ENCODE measurements at regions of chr9 and their contacts with region 1.

Region 1: DNA sequence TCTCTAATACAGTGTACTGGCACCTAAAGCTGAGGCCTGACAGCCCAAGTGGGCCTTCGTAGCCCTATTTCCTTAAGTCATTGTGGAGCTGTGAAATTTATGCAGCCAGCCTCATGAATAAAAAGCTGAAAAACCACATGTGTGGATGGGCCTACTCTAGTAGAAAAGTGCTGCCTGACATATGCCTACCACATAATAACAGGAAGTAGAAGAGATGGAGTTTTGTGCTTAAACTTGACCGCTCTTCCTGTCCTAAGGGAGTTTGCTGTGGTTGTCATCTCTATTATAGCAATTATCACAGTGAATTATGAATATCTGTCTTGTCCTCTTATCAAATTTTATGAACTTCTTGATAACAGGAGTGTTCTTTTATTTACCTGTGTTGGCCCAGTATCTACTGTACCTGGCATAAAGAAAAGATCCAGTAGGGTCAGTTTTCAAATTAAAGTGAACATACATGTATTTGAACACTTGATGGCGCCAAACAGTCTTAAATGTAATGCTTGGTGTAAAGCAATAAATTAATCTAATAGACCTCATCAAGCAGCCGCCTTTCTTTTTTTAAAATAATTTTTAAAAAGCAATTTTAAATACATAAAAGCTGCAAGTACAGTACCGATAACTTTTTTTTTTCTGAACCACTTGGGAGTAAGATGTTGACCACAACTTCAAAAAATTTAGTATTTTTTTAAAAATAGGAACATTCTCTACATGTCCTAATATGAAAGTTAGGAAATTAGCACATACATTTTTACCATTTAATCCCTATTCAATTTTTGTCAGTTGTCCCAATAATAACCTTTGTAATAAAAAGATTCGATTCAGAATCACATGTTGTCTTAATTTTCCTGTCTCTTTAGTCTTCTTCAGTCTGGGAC is 51.0 kb downstream of the FKTN start:
- DNase-seq: peak; percentile 34
- CTCF ChIP-seq: peak; percentile 42

Region 2: GRCh38 chr9:104863180-104863883 is 745.6 kb before region 1 on chr9:
- CTCF ChIA-PET with region 1: no interaction called
- POLR2A ChIA-PET with region 1: no interaction called
- DNase-seq: peak; percentile 65
- CTCF ChIP-seq: peak; percentile 85

Region 3: DNA sequence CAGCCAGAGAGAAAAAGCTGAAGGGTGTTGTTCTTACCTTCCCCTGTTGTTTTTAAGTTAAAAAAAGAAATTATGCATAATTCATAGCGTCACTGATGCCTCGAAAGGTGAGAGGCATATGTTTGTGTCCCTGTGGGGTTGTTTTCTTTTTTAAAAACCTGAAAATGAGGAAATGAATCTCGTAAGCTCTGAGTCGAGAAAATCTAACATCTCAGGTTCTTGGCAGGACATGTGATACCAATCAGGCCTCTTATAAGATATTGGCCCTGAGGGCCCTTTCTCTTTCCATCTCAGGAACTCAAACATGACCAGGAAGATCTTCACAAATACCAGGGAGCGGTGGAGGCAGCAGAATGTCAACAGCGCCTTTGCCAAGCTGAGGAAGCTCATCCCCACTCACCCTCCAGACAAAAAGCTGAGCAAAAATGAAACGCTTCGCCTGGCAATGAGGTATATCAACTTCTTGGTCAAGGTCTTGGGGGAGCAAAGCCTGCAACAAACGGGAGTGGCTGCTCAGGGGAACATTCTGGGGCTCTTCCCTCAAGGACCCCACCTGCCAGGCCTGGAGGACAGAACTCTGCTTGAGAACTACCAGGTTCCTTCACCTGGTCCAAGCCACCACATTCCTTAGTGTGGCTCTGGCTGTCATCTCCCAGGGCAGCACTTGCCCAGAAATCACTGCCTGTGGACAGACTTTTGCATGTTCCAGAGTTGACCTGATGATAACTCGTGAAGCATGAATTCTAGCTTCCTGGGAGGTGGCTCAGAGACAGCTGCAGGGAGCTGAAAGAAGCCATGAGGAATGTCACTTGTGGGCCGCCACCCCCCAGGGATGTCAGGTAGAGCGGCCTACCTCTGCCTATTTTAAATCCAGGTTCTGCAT is 53.5 kb after region 1 on chr9 and contains the start of gene TAL2:
- CTCF ChIA-PET with region 1: no interaction called
- POLR2A ChIA-PET with region 1: no interaction called
- DNase-seq: peak; percentile 49
- CTCF ChIP-seq: no peak

Region 4: GRCh38 chr9:105712773-105713172 is 103.8 kb after region 1 on chr9:
- CTCF ChIA-PET with region 1: interaction called, 16 read pairs
- POLR2A ChIA-PET with region 1: no interaction called
- DNase-seq: no peak
- CTCF ChIP-seq: no peak